ENCODE measurements at regions of chr19 and their contacts with region 1.

Region 1: GRCh38 chr19:47348819-47349795 is at the start of gene DHX34:
- DNase-seq: peak; percentile 99
- H3K4me3 Mint-ChIP-seq: peak within 1 kb of the TSS; percentile 98
- H3K27ac Mint-ChIP-seq: peak within 1 kb of the TSS; percentile 77
- H3K4me1 Mint-ChIP-seq: peaks cover 31% of the 10 kb centered on the region
- H3K27me3 Mint-ChIP-seq: no peaks in the 10 kb centered on the region
- total RNA-seq, gene DHX34: 10.3 to 10.5 TPM

Region 2: DNA sequence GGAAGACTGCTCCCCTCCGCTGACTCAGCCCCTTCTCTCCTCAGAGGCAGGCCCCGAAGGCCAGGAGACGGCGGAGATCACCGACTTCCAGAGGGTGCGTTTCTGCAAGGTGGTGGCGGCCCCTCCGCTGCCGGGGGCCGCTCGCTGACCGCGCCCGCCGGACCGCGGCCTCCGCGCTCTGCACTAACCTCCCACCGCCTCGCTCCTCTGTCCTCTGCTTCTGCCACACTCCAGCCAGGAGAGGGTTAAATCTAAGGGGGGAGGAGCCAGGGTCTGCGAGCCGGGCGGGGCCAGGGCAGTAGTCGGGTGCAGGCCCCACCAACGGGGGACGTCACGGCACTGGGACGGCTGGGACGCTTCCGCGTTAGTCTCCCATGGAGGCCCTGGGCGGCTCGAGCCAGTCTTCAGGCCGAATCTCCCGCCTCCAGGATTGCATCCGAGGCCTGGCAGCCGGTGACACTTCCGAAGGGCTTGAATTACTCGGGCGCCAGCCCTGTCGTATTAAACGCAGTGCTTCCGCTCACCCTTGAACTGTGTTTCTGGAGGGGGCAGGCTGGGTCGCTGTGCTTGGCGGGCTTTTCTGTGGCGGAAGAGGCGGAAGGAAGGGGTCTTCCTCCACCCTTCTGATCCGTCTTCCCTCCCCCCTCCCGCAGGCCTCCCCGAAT is 75.7 kb before region 1 on chr19:
- CTCF ChIA-PET with region 1: interaction called, 14 read pairs
- POLR2A ChIA-PET with region 1: interaction called, 14 read pairs
- DNase-seq: peak; percentile 93
- H3K4me3 Mint-ChIP-seq: peak overlapping the region; percentile 98
- H3K27ac Mint-ChIP-seq: peak overlapping the region; percentile 99
- H3K4me1 Mint-ChIP-seq: peaks cover 21% of the 10 kb centered on the region
- H3K27me3 Mint-ChIP-seq: no peaks in the 10 kb centered on the region

Region 3: GRCh38 chr19:47330466-47330869 is 18.6 kb before region 1 on chr19:
- CTCF ChIA-PET with region 1: interaction called, 75 read pairs
- POLR2A ChIA-PET with region 1: interaction called, 52 read pairs
- DNase-seq: no peak
- H3K4me3 Mint-ChIP-seq: no peak overlapping the region
- H3K27ac Mint-ChIP-seq: peak overlapping the region; percentile 68
- H3K4me1 Mint-ChIP-seq: peaks cover 26% of the 10 kb centered on the region
- H3K27me3 Mint-ChIP-seq: peaks cover 8% of the 10 kb centered on the region

Region 4: GRCh38 chr19:47363758-47364531 is 14.8 kb after region 1 on chr19:
- CTCF ChIA-PET with region 1: interaction called, 17 read pairs
- POLR2A ChIA-PET with region 1: interaction called, 4 read pairs
- DNase-seq: no peak
- H3K4me3 Mint-ChIP-seq: no peak overlapping the region
- H3K27ac Mint-ChIP-seq: no peak overlapping the region
- H3K4me1 Mint-ChIP-seq: peaks cover 3% of the 10 kb centered on the region
- H3K27me3 Mint-ChIP-seq: no peaks in the 10 kb centered on the region

Region 5: GRCh38 chr19:47398707-47399597 is 49.8 kb after region 1 on chr19:
- CTCF ChIA-PET with region 1: no interaction called
- POLR2A ChIA-PET with region 1: no interaction called
- DNase-seq: no peak
- H3K4me3 Mint-ChIP-seq: no peak overlapping the region
- H3K27ac Mint-ChIP-seq: no peak overlapping the region
- H3K4me1 Mint-ChIP-seq: no peaks in the 10 kb centered on the region
- H3K27me3 Mint-ChIP-seq: peaks cover 9% of the 10 kb centered on the region

Region 6: GRCh38 chr19:47428177-47428894 is 79.2 kb after region 1 on chr19:
- CTCF ChIA-PET with region 1: interaction called, 23 read pairs
- POLR2A ChIA-PET with region 1: interaction called, 5 read pairs
- DNase-seq: peak; percentile 94
- H3K4me3 Mint-ChIP-seq: no peak overlapping the region
- H3K27ac Mint-ChIP-seq: no peak overlapping the region
- H3K4me1 Mint-ChIP-seq: peaks cover 29% of the 10 kb centered on the region
- H3K27me3 Mint-ChIP-seq: peaks cover 31% of the 10 kb centered on the region

Measured in activated CD4-positive, alpha-beta memory T cell treated with anti-CD3 and anti-CD28 coated beads, Interleukin-2, amount 10 ng/mL, durations not matched to agents 7 days and 5 days (primary cell).